PC-3 (cell line): ENCODE measurements at regions of chr1 and their contacts with region 1.

Region 1: GRCh38 chr1:15178571-15179484 is 25.3 kb downstream of the TMEM51 start:
- DNase-seq: peak; percentile 94
- ATAC-seq: peak; percentile 92
- H3K4me3 ChIP-seq: peak overlapping the region; percentile 22; the same call in 1 of the 2 replicates
- H3K27ac ChIP-seq: peak overlapping the region; percentile 95
- H3K4me1 ChIP-seq: peaks cover 48% of the 10 kb centered on the region
- H3K27me3 ChIP-seq: no peaks in the 10 kb centered on the region
- CTCF ChIP-seq: no peak

Region 2: DNA sequence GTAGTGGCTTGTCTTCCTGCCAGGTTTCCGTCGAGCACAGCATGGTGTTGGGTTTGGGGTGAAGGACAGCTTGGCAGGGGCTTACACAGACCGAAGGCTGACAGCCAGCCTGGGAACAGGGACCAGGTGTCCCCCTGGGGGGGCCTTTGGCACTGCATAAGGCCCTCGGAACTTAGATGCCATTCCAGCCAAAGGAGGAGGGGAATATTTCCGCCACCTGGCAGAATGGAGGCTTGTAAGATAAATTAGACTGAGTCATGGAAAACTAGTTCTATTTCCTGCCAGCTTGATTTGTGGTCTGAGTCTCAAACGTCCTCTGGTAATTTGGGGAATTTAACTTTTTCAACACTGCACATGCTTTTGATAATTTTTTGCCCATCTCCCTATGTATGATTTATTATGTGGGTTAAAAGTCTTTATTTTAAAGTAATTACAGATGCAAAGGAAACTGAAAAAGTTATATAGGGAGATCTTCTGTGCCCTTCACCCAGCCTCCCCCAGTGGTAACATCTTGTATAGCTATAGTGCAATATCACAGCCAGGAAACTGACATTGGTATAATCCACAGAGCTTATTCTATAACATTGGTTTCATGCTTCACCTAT is 36.8 kb before region 1 on chr1:
- CTCF ChIA-PET with region 1: no interaction called
- POLR2A ChIA-PET with region 1: no interaction called
- intact Hi-C with region 1: no loop called
- DNase-seq: peak; percentile 66
- ATAC-seq: peak; percentile 53
- H3K4me3 ChIP-seq: no peak overlapping the region
- H3K27ac ChIP-seq: peak overlapping the region; percentile 47
- H3K4me1 ChIP-seq: peaks cover 19% of the 10 kb centered on the region
- H3K27me3 ChIP-seq: no peaks in the 10 kb centered on the region
- CTCF ChIP-seq: peak; percentile 39

Region 3: DNA sequence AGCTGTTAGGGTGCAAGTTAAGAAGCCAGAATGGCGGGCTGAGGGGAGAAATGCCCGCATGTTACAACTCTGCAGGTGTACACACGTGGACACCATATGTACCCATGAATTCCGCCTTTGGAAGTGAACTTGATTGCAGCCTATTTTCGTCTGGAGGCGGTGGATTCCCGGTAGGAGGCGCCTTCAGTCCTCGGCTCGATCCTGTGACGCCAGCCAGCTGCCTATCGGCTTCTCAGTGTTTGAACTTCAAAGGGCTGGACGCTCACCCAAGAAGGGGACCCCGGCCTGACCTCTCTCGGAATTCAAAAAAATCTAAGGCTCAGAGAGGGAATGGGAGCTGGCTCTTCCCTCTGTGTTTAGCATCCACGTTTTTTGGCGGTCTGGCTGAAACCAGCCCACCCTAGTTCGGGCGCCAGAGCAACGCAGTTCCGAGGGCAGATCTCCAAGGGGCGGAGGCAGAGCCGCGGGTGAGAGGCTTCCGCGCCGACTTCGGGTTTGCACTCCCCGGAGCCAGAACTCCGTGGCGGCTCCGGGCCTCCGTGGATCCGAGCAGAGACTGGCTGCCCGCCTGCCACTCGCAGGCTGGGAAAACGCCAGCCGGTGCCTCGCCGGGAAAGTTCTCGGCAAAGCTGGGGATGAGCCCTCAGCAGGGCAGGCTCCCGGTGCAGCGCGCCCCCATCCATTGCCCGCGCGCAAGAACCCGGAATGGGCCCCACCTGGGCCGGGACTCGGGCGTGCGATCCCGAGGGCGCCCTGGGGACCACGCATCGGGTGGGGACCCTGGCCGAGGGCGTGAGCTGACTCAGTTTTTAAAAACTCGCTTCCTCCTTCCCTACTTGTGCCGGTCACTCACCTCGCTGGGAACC is 26.3 kb before region 1 on chr1:
- CTCF ChIA-PET with region 1: no interaction called
- POLR2A ChIA-PET with region 1: no interaction called
- intact Hi-C with region 1: loop called (anchors 2 kb)
- DNase-seq: peak; percentile 89
- ATAC-seq: peak; percentile 52
- H3K4me3 ChIP-seq: peak overlapping the region; percentile 76
- H3K27ac ChIP-seq: peak overlapping the region; percentile 67
- H3K4me1 ChIP-seq: peaks cover 21% of the 10 kb centered on the region
- H3K27me3 ChIP-seq: no peaks in the 10 kb centered on the region
- CTCF ChIP-seq: peak; percentile 80

Region 4: DNA sequence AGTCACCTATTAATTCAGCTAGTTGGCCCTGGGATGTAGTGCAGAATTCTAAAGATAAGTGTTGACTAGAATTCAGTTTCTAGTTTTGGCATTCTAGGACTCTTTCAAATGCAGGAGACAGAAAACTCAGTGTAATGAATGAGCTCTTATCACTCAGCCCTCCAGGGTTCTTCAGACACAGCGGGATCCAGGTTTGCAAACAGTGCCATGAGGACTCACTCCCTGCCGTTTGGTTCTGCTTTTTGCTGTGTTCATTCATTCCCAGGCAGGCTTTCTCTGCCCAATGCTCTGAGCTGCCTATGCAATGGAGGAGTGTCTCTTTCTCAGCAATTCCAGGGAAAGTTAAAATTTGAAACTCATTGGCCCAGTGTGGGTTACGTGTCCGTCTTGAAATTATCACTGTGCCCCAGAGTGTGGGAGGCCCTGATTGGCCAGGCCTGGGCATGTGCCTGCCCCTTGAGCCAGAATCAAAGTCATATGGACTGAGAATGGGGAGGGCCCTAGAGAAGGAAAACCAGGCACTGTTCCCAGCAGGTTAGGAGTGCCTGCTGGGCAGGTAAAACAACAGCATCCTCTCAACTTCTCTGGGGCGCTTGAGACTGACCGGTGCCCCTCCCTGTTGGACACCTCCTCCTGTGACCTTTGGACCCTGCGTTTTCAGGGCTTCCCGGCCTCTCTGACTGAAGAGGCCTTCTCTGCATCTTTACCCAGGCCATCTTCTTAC is 18.1 kb after region 1 on chr1:
- CTCF ChIA-PET with region 1: interaction called, 3 read pairs
- POLR2A ChIA-PET with region 1: interaction called, 3 read pairs
- intact Hi-C with region 1: loop called (anchors 1 kb)
- DNase-seq: no peak
- ATAC-seq: no peak
- H3K4me3 ChIP-seq: no peak overlapping the region
- H3K27ac ChIP-seq: no peak overlapping the region
- H3K4me1 ChIP-seq: peaks cover 24% of the 10 kb centered on the region
- H3K27me3 ChIP-seq: no peaks in the 10 kb centered on the region
- CTCF ChIP-seq: no peak

Region 5: GRCh38 chr1:15218287-15219279 is 39.8 kb after region 1 on chr1:
- CTCF ChIA-PET with region 1: no interaction called
- POLR2A ChIA-PET with region 1: no interaction called
- intact Hi-C with region 1: no loop called
- DNase-seq: peak; percentile 84
- ATAC-seq: peak; percentile 81
- H3K4me3 ChIP-seq: no peak overlapping the region
- H3K27ac ChIP-seq: peak overlapping the region; percentile 78
- H3K4me1 ChIP-seq: peaks cover 24% of the 10 kb centered on the region
- H3K27me3 ChIP-seq: no peaks in the 10 kb centered on the region
- CTCF ChIP-seq: no peak

Region 6: DNA sequence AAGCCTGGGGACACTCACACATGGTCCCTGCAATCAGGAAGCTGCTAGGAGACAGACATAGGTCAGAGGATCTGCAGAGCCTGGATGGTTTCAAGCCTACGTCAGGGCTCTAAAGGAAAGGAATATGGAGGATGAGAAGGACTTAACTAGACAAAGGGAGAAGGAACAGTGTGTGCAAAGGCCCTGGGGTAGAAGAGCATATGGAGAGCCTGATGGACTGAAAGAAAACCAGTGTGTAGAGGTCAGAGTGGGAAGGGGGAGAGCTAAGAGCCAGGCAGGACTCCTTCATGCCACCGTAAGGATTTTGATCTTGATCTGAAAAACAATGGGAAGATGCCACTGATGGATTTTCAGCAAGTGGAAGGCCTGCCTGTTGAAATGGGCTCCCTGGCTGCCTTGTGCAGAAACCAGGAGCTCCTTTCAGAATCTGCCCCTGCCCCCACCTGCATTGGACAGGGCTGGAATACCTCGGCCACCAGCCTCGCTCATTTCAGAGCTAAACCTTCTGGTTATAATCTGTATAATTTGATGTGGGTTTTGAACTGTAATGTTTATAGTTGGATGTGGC is 76.8 kb after region 1 on chr1:
- CTCF ChIA-PET with region 1: interaction called, 18 read pairs
- POLR2A ChIA-PET with region 1: no interaction called
- intact Hi-C with region 1: no loop called
- DNase-seq: no peak
- ATAC-seq: no peak
- H3K4me3 ChIP-seq: no peak overlapping the region
- H3K27ac ChIP-seq: no peak overlapping the region
- H3K4me1 ChIP-seq: no peaks in the 10 kb centered on the region
- H3K27me3 ChIP-seq: no peaks in the 10 kb centered on the region
- CTCF ChIP-seq: no peak

Region 7: GRCh38 chr1:15501208-15502032 is 322.6 kb after region 1 on chr1:
- CTCF ChIA-PET with region 1: no interaction called
- POLR2A ChIA-PET with region 1: no interaction called
- intact Hi-C with region 1: no loop called
- DNase-seq: peak; percentile 71
- ATAC-seq: peak; percentile 88
- H3K4me3 ChIP-seq: no peak overlapping the region
- H3K27ac ChIP-seq: no peak overlapping the region
- H3K4me1 ChIP-seq: no peaks in the 10 kb centered on the region
- H3K27me3 ChIP-seq: no peaks in the 10 kb centered on the region
- CTCF ChIP-seq: peak; percentile 81